ENCODE measurements at regions of chr2 and their contacts with region 1.

Region 1: GRCh38 chr2:133171393-133172004 is 396.8 kb downstream of the NCKAP5 start:
- DNase-seq: peak; percentile 46
- H3K4me3 Mint-ChIP-seq: no peak overlapping the region
- H3K27ac Mint-ChIP-seq: no peak overlapping the region
- H3K4me1 Mint-ChIP-seq: no peaks in the 10 kb centered on the region
- H3K27me3 Mint-ChIP-seq: no peaks in the 10 kb centered on the region
- CTCF ChIP-seq: peak; percentile 49

Region 2: DNA sequence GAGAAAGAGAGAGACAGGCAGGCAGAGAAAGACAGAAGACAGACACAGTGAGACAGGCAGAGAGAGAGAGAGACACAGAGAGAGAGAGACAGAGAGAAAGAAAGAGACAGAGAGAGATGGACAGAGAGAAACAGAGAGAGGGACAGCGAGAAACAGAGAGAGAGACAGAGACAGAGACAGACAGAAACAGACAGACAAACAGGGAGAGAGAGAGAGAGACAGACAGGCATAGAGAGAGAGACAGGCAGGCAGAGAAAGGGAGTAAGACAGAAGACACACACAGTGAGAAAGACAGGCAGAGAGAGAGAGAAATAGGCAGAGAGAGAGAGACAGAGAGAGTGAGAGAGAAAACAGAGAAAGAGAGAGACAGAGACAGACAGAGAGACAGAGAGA is 904.4 kb before region 1 on chr2:
- CTCF ChIA-PET with region 1: no interaction called
- intact Hi-C with region 1: loop called (anchors 2 kb)
- DNase-seq: no peak
- H3K4me3 Mint-ChIP-seq: no peak overlapping the region
- H3K27ac Mint-ChIP-seq: no peak overlapping the region
- H3K4me1 Mint-ChIP-seq: no peaks in the 10 kb centered on the region
- H3K27me3 Mint-ChIP-seq: no peaks in the 10 kb centered on the region
- CTCF ChIP-seq: no peak

Region 3: DNA sequence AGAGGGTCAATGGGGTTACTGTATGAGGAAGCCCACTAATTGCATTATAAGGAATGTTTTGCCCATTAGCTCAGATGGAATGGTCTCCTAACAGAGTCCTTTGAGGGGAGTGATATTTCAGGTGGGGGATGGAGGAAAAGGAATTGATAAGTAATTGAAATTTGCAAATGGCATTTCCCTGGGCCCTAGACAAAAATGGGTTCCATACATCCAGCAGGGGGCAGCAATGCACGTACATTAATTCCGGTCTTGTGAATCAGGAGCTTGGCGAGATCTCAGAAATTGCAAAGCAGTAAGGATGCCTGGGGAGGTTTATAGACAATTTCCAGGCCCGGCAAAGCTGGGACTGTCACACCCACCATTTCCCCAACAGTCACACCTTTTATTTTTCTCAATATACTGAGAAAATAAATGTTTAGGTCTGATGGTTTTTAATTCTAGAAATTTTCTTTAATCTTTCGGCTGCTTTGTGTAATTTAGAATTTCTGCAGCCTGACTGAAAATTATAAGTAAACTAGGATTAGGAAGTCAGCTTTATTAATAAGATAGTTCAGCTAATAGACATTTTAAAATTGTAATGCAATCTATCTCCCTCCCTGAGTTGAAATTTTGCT is 624.3 kb before region 1 on chr2:
- CTCF ChIA-PET with region 1: interaction called, 10 read pairs
- intact Hi-C with region 1: loop called (anchors 1 kb)
- DNase-seq: peak; percentile 79
- H3K4me3 Mint-ChIP-seq: no peak overlapping the region
- H3K27ac Mint-ChIP-seq: no peak overlapping the region
- H3K4me1 Mint-ChIP-seq: peaks cover 9% of the 10 kb centered on the region
- H3K27me3 Mint-ChIP-seq: no peaks in the 10 kb centered on the region
- CTCF ChIP-seq: peak; percentile 79

Region 4: DNA sequence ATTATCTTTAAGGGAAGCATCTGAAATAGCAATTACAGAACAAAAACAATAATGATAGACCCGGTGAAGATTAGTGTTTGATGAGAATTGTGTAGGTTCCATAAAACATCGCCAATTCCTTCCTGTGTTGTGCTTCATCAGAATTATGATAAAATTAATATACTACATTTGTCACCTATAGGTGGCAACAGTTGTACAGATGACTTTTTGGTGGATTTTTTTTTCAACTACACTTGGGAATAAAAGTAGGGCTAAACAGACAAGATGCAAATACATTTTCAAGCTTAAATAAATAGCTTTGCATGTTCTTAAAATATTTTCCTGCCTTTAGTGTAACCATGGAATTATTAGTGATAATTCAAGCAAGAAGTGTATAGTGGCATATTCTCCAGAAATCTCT is 494.5 kb before region 1 on chr2:
- CTCF ChIA-PET with region 1: interaction called, 5 read pairs
- intact Hi-C with region 1: loop called (anchors 1 kb)
- DNase-seq: no peak
- H3K4me3 Mint-ChIP-seq: no peak overlapping the region
- H3K27ac Mint-ChIP-seq: no peak overlapping the region
- H3K4me1 Mint-ChIP-seq: peaks cover 8% of the 10 kb centered on the region
- H3K27me3 Mint-ChIP-seq: peaks cover 15% of the 10 kb centered on the region
- CTCF ChIP-seq: no peak

Region 5: GRCh38 chr2:133004623-133005022 is 166.9 kb before region 1 on chr2:
- CTCF ChIA-PET with region 1: no interaction called
- intact Hi-C with region 1: no loop called
- DNase-seq: peak; percentile 19
- H3K4me3 Mint-ChIP-seq: no peak overlapping the region
- H3K27ac Mint-ChIP-seq: no peak overlapping the region
- H3K4me1 Mint-ChIP-seq: peaks cover 14% of the 10 kb centered on the region
- H3K27me3 Mint-ChIP-seq: no peaks in the 10 kb centered on the region
- CTCF ChIP-seq: no peak

Region 6: DNA sequence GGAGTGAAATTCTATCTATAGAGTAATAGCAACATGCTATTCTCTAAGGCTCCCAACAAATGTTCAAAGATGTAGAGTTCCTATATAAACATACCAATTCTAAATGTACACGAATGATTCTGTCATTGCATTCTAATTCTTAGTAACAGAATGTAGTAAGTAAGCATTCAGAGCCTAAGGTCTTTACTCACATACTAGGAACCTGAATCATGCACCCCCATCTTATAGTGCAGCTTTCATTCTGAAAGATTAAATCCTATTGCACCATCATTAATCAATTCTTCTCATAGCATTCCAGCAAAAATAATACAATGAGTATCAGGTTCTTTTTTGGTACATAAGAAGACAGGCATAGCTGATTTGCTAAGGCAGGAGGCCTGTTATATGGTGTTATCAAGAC is 166.7 kb after region 1 on chr2:
- CTCF ChIA-PET with region 1: no interaction called
- intact Hi-C with region 1: no loop called
- DNase-seq: no peak
- H3K4me3 Mint-ChIP-seq: no peak overlapping the region
- H3K27ac Mint-ChIP-seq: no peak overlapping the region
- H3K4me1 Mint-ChIP-seq: no peaks in the 10 kb centered on the region
- H3K27me3 Mint-ChIP-seq: no peaks in the 10 kb centered on the region
- CTCF ChIP-seq: no peak

Region 7: GRCh38 chr2:133484106-133484505 is 312.6 kb after region 1 on chr2:
- CTCF ChIA-PET with region 1: no interaction called
- intact Hi-C with region 1: no loop called
- DNase-seq: no peak
- H3K4me3 Mint-ChIP-seq: no peak overlapping the region
- H3K27ac Mint-ChIP-seq: no peak overlapping the region
- H3K4me1 Mint-ChIP-seq: peaks cover 16% of the 10 kb centered on the region
- H3K27me3 Mint-ChIP-seq: no peaks in the 10 kb centered on the region
- CTCF ChIP-seq: no peak

Region 8: DNA sequence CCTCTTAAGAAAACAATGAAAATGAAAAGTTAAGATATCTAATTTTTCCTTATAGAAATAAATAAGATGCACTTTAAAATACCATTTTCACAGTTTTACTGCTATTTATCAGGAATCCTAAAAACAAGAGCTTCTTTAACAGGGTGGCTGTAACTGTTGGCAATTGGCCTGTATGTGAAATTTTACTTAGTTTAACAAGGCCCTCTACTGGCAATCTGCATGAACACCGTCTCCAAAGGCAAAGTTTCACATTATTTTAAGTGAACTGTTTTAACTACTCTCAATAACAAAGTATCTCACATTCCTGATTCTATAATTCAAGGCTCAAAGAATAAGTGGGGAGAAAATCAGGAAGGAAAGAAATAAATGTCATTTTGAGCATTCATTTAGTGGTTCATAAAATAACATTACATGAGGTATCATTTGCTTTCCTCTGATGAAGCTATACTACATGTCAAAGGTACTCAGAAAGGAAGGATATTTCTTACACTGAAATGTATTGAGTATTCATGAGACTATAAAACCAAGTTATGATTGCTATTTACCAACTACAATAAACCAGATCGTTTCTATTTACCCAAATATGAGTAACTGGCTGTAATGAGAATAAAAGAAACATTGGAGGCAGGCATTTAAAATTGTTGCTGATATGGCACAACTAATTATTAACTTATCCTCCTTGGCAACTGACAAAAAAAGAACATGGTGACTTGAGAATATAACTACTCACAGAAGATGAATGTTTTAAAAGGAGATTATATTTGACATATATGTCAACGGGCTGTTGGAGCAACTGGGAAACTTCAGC is 389.8 kb after region 1 on chr2:
- CTCF ChIA-PET with region 1: no interaction called
- intact Hi-C with region 1: loop called (anchors 2 kb)
- DNase-seq: peak; percentile 15
- H3K4me3 Mint-ChIP-seq: no peak overlapping the region
- H3K27ac Mint-ChIP-seq: no peak overlapping the region
- H3K4me1 Mint-ChIP-seq: no peaks in the 10 kb centered on the region
- H3K27me3 Mint-ChIP-seq: peaks cover 17% of the 10 kb centered on the region
- CTCF ChIP-seq: peak; percentile 51

Region 9: DNA sequence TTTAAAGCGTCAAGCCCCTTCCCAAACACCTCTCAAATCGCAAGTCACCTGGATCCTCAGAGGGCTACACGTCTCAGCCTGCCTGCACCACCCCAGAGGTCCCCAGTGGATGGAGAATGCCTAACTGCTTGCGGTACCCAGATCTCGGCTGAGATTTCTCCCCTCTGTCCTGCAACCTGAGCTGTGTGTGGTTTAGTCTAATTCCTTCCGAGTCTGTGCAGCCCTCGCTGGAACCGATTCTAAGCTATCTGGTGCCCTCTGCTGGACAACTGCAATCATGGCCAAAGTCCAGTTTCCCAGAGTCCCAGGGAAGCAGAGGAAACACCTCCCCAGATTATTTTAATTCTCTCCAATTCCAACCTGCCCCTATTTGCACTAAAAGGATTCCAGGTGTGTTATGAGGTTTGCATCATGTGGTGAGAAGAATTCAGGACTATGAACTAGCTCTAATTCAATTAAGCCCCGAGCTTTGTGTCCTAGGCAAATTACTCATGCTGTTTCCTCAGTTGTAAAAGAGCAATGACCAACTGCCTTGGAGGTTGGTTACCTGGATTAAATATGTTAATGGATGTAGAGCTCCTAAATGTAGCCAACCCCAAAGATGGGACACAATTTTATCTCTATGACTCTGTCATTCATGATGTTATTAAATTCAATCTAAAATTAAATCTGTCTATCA is 672.9 kb after region 1 on chr2:
- CTCF ChIA-PET with region 1: interaction called, 4 read pairs
- intact Hi-C with region 1: loop called (anchors 5 kb)
- DNase-seq: peak; percentile 77
- H3K4me3 Mint-ChIP-seq: no peak overlapping the region
- H3K27ac Mint-ChIP-seq: no peak overlapping the region
- H3K4me1 Mint-ChIP-seq: peaks cover 29% of the 10 kb centered on the region
- H3K27me3 Mint-ChIP-seq: no peaks in the 10 kb centered on the region
- CTCF ChIP-seq: peak; percentile 82

Measured in Calu3 (cell line).